Sigmoid colon (tissue), 7 donors: ENCODE measurements at regions of chr3 and their contacts with region 1.

Region 1: GRCh38 chr3:14921078-14921616 is 26.2 kb upstream of the NR2C2 start:
- DNase-seq: peak; percentile 94
- H3K4me3 ChIP-seq: no peak overlapping the region
- H3K27ac ChIP-seq: no peak overlapping the region
- H3K4me1 ChIP-seq: peaks cover 0 to 6% (median 2%) of the 10 kb centered on the region in 4 donors
- H3K27me3 ChIP-seq: no peaks in the 10 kb centered on the region
- CTCF ChIP-seq: peak; percentile 96 to 100 (median 98)
- EP300 ChIP-seq: no peak
- POLR2A ChIP-seq: no peak

Region 2: DNA sequence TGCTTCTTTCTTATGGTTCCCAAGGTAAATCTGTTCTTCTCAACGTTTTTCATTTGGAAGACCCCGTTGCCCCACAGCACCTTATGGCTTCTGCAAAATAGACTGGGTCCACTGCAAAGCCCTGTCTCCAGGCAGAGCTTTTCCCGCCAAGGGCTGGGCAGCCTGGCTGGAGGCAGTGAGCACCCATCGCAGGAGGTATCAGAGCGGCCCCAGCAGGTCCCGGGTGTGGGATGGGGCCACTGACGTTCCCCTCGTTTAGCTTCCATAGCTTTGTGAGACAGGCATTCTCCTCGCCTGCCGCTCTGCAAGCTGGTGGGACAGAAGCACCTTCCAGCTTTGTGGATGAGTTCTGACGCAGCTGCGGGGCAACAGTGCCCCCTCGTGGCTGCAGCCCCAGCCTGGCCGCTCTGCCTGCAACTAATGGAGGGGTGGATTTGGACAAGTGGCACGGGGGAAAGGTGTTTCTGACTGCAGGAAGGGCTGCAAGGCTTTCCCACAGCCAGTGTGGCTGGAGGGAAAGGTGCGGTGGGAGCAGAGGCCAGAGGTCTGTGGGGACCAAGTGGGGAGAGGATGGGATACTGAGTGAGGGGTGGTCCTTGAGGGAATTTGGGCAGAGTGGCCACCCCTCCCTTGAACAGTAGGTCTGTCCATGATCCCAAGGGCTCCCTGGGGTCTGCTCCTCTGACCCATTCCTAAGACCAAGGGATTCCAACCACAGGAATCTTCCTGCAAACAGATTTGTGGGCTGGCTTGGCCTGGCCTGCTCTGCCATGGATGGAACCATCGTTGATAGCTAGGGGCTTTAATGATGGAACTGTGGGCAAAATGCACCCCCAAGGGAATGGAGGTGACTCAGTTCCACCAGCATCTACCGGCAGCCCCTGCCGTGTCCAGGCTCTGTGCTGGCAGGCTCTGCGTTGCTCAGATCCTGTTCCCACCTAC is 1272.8 kb before region 1 on chr3:
- intact Hi-C with region 1: loop called (anchors 10 kb)
- DNase-seq: peak; percentile 86
- H3K4me3 ChIP-seq: no peak overlapping the region
- H3K27ac ChIP-seq: no peak overlapping the region
- H3K4me1 ChIP-seq: peaks cover 0 to 23% (median 16%) of the 10 kb centered on the region in 4 donors
- H3K27me3 ChIP-seq: peaks cover 0 to 17% (median 9%) of the 10 kb centered on the region in 3 donors
- CTCF ChIP-seq: peak; percentile 86 to 98 (median 92)
- EP300 ChIP-seq: no peak
- POLR2A ChIP-seq: no peak

Region 3: DNA sequence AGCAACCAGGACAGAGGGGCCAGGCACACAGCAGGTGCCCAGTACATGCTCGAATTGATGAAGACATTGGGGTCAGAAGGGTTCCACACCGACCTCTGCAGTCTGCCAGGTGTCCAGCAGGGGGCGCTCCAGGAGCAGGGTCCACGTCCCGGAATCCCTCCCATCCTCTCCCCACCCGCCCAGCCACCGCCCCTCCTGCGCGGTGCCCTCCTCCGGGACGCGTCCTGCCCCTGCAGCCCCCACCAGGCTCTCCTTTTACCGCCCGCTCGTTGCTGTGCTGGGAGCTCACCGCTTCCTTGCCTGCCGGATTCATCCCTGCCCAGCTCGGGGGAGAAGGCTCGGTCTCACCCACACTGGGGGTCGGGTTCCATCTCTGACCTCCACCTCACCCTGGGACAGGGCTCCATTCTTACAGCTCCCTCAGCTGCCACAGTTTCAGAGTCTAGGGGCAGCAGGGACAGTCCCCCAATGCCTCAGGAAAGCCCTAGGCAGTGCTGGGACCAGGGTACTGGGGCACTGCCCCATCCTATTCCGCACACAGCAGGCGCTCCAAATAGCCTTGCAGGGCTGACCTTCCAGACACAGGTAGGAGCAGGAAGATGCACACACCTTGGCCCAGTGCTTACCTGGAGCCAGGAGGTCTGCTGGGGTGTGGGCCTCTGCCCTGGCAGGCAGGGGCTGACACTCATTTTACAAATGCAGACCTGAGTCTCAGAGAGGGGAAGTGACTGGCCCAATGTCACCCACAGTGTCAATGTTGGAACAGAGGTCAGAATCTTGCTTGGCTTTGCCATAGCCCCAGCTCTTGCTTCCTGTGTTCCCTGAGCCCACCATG is 412.0 kb before region 1 on chr3:
- intact Hi-C with region 1: loop called (anchors 2 kb)
- DNase-seq: peak; percentile 74
- H3K4me3 ChIP-seq: peak overlapping the region in 1 of 4 donors; percentile 21
- H3K27ac ChIP-seq: no peak overlapping the region
- H3K4me1 ChIP-seq: peaks cover 0 to 6% (median 2%) of the 10 kb centered on the region in 4 donors
- H3K27me3 ChIP-seq: no peaks in the 10 kb centered on the region
- CTCF ChIP-seq: peak; percentile 31 to 98 (median 74)
- EP300 ChIP-seq: no peak
- POLR2A ChIP-seq: no peak

Region 4: DNA sequence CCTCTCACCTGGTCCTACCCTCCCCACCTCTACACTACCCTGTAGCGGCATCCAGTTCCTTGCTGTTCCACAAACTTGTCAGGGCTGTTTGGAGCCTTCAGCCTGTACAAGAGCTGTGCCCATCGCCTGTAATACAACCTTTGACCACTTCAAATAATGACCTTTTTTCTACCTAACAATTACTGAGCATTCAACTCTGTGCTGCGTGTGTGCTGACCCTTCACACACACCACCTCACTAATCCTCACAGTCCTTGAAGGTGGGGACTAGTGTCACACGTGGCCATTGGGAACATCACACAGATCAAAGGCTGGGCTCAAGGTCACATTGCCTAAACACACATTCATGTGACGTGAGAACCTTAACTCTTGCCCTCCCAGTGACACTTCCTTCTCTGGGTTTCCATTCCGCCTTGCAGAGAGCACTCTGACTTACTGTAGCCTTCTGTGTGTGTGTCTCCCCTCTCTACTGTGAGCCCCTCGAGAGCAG is 243.1 kb before region 1 on chr3:
- intact Hi-C with region 1: loop called (anchors 1 kb)
- DNase-seq: no peak
- H3K4me3 ChIP-seq: no peak overlapping the region
- H3K27ac ChIP-seq: no peak overlapping the region
- H3K4me1 ChIP-seq: no peaks in the 10 kb centered on the region
- H3K27me3 ChIP-seq: no peaks in the 10 kb centered on the region
- CTCF ChIP-seq: no peak
- EP300 ChIP-seq: no peak
- POLR2A ChIP-seq: no peak

Region 5: GRCh38 chr3:14791343-14791945 is 129.7 kb before region 1 on chr3:
- intact Hi-C with region 1: loop called (anchors 5 kb)
- DNase-seq: peak; percentile 84
- H3K4me3 ChIP-seq: no peak overlapping the region
- H3K27ac ChIP-seq: no peak overlapping the region
- H3K4me1 ChIP-seq: peaks cover 0 to 4% (median 2%) of the 10 kb centered on the region in 4 donors
- H3K27me3 ChIP-seq: no peaks in the 10 kb centered on the region
- CTCF ChIP-seq: peak in 3 of 4 experiments; percentile 33 to 47 (median 34)
- EP300 ChIP-seq: no peak
- POLR2A ChIP-seq: no peak

Region 6: GRCh38 chr3:14847613-14848541 is 73.3 kb before region 1 on chr3:
- intact Hi-C with region 1: no loop called
- DNase-seq: peak; percentile 72
- H3K4me3 ChIP-seq: no peak overlapping the region
- H3K27ac ChIP-seq: peak overlapping the region; percentile 16 to 57 (median 26)
- H3K4me1 ChIP-seq: peaks cover 0 to 5% (median 5%) of the 10 kb centered on the region in 4 donors
- H3K27me3 ChIP-seq: peaks cover 0 to 3% (median 0%) of the 10 kb centered on the region in 3 donors
- CTCF ChIP-seq: no peak
- EP300 ChIP-seq: no peak
- POLR2A ChIP-seq: no peak

Region 7: GRCh38 chr3:15051531-15051930 is 130.4 kb after region 1 on chr3:
- intact Hi-C with region 1: no loop called
- DNase-seq: no peak
- H3K4me3 ChIP-seq: no peak overlapping the region
- H3K27ac ChIP-seq: no peak overlapping the region
- H3K4me1 ChIP-seq: no peaks in the 10 kb centered on the region
- H3K27me3 ChIP-seq: no peaks in the 10 kb centered on the region
- CTCF ChIP-seq: peak in 1 of 4 experiments; percentile 26
- EP300 ChIP-seq: no peak
- POLR2A ChIP-seq: no peak

Region 8: DNA sequence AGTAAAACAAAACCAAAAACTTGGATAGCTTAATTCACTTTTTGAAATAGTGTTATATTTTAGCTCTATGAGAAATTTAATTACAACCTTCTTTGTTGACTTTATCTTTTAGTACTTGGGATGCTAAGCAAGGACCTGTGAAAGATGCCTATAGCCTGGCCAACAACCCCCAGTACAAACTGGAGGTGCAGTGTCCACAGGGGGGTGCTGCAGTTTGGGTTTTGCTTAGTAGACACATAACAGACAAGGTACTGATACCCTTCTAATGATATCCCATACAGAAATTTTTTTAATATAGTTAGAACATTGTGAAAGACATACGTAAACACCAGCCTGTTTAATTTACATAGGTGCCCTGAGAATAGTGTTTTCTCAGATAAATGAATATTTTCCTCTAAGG is 320.2 kb after region 1 on chr3:
- intact Hi-C with region 1: no loop called
- DNase-seq: peak; percentile 71
- H3K4me3 ChIP-seq: no peak overlapping the region
- H3K27ac ChIP-seq: no peak overlapping the region
- H3K4me1 ChIP-seq: no peaks in the 10 kb centered on the region
- H3K27me3 ChIP-seq: no peaks in the 10 kb centered on the region
- CTCF ChIP-seq: peak in 1 of 4 experiments; percentile 10
- EP300 ChIP-seq: no peak
- POLR2A ChIP-seq: no peak